Activated CD4-positive, alpha-beta memory T cell treated with anti-CD3 and anti-CD28 coated beads for 36 hours (primary cell): ENCODE measurements at regions of chr12 and their contacts with region 1.

Region 1: DNA sequence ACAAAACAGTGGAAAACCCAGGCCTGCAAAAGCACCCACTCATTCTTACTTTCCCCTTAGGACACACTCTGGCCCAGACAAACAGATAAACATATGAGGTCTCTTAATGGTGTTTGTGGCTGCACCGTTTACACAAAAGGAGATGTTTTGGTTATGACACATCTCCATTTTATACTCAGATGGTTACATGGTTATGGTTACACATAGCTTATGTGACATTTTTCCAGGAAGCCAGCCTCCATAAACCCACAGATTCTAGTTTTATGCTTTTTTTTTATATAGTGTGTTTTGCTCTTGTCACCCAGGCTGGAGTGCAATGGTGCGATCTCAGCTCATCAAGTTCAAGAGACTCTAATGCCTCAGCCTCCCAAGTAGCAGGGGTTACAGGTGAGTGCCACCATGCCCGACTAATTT is 3.5 kb upstream of the KLRD1 start:
- DNase-seq: peak; percentile 65
- H3K4me3 Mint-ChIP-seq: no peak overlapping the region
- H3K27ac Mint-ChIP-seq: peak overlapping the region; percentile 46
- H3K4me1 Mint-ChIP-seq: peaks cover 44% of the 10 kb centered on the region
- H3K27me3 Mint-ChIP-seq: peaks cover 21% of the 10 kb centered on the region

Region 2: DNA sequence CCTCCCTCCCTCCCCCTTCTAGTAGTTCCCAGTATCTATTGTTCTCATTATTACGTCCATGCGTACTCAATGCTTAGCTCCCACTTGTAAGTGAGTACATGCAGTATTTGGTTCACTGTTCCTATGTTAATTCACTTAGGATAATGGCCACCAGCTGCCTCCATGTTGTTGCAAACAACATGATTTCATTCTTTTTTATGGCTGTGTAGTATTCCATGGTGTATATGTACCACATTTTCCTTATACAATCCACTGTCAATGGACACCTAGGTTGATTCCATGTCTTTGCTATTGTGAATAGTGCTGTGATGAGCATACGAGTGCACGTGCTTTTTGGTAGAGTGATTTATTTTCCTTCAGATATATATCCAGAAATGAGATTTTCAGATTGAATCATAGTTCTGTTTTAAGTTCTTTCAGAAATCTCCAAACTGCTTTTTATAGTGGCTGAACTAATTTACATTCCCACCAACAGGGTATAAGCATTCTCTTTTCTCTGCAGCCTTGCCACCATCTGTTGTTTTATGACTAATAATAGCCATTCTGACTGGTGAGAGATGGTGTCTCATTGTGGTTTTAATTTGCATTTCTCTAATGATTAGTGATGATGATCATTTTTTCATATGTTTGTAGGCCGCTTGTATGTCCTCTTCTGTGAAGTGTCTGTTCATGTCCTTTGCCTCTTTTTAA is 156.3 kb before region 1 on chr12:
- CTCF ChIA-PET with region 1: no interaction called
- POLR2A ChIA-PET with region 1: no interaction called
- intact Hi-C with region 1: loop called (anchors 5 kb)
- DNase-seq: no peak
- H3K4me3 Mint-ChIP-seq: no peak overlapping the region
- H3K27ac Mint-ChIP-seq: no peak overlapping the region
- H3K4me1 Mint-ChIP-seq: peaks cover 10% of the 10 kb centered on the region
- H3K27me3 Mint-ChIP-seq: peaks cover 13% of the 10 kb centered on the region

Region 3: DNA sequence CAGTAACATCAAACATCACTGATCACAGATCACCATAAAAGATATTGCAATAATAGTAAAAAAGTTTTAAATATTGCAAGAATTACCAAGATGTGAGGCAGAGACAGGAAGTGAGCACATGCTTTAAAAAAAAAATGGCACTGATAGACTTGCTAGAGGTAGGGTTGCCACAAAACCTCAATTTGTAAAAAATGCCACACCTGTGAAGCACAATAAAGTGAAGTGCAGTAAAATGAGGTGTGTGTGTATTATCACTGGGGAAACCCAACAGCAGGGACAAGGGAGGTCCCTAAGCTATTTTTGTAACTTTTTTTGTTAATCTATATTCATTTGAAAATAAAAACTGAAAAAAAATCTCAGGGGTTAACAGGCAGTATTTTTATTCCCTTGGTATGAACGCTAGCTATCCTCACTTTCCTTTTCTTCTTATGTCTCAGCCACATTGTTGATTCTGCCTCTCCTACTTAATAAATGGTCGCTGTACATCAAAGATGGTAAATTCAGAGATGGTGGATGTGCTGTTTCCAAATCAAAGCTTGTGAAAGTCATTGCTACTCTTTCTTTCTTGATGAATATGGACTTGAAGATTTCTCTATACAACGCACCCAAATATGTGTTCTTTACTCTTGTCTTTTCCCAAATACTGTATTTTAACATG is 10.5 kb before region 1 on chr12:
- CTCF ChIA-PET with region 1: interaction called, 3 read pairs
- POLR2A ChIA-PET with region 1: no interaction called
- intact Hi-C with region 1: loop called (anchors 1 kb)
- DNase-seq: no peak
- H3K4me3 Mint-ChIP-seq: no peak overlapping the region
- H3K27ac Mint-ChIP-seq: no peak overlapping the region
- H3K4me1 Mint-ChIP-seq: peaks cover 17% of the 10 kb centered on the region
- H3K27me3 Mint-ChIP-seq: peaks cover 10% of the 10 kb centered on the region

Region 4: GRCh38 chr12:10497602-10498001 is 193.4 kb after region 1 on chr12:
- CTCF ChIA-PET with region 1: no interaction called
- POLR2A ChIA-PET with region 1: no interaction called
- intact Hi-C with region 1: loop called (anchors 1 kb)
- DNase-seq: peak; percentile 53
- H3K4me3 Mint-ChIP-seq: no peak overlapping the region
- H3K27ac Mint-ChIP-seq: no peak overlapping the region
- H3K4me1 Mint-ChIP-seq: peaks cover 5% of the 10 kb centered on the region
- H3K27me3 Mint-ChIP-seq: peaks cover 29% of the 10 kb centered on the region

Region 5: GRCh38 chr12:10673660-10674384 is 369.7 kb after region 1 on chr12 and contains the start of gene STYK1:
- CTCF ChIA-PET with region 1: no interaction called
- POLR2A ChIA-PET with region 1: no interaction called
- intact Hi-C with region 1: loop called (anchors 10 kb)
- DNase-seq: peak; percentile 78
- H3K4me3 Mint-ChIP-seq: peak within 1 kb of the TSS; percentile 67
- H3K27ac Mint-ChIP-seq: no peak within 1 kb of the TSS
- H3K4me1 Mint-ChIP-seq: peaks cover 26% of the 10 kb centered on the region
- H3K27me3 Mint-ChIP-seq: peaks cover 38% of the 10 kb centered on the region
- total RNA-seq, gene STYK1: not detected